Testis (tissue), 5 donors: ENCODE measurements at regions of chr17 and their contacts with region 1.

Region 1: DNA sequence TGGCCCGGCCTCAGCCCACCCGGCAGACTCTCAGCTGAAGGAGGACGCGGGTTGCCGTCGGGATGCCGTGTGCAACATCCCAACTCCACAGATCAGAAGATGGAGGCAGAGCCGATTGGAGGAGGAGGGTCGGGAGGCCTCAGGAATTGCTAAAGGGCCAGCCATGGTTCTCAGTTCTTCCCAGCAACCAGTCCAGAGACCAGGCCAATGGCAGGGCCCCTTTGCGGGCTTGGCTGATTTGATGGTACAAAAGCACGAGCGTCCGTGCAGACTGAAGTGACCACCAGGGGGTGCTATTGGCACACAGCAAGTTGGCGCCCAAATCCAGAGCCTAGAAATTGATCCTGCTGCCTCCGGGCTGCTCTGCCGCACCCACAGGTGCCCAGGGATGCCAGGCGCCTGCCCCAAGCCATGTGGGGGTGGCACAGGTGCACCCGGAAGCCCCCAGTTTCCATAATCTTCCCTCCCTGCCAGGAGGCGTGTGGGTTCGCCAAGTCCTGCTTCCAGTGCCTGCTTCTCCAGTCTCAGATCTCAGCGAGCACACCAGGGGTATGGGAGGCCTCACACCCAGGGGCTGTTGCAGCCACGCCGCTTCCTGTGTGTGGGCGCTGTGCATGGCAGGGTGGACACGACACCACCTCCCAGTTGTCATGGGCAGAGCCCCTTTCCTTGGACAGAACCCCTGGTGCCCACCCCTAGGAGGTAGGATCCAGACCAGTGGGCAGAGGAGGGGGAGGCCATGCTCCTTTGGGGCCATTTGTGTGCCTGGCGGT is 7.1 kb upstream of the TEX19 start:
- DNase-seq: peak; percentile 92
- H3K4me3 ChIP-seq: no peak overlapping the region
- H3K27ac ChIP-seq: no peak overlapping the region
- H3K4me1 ChIP-seq: peaks cover 8% of the 10 kb centered on the region
- H3K27me3 ChIP-seq: no peaks in the 10 kb centered on the region
- CTCF ChIP-seq: peak; percentile 92 to 98 (median 95)
- POLR2A ChIP-seq: no peak

Region 2: DNA sequence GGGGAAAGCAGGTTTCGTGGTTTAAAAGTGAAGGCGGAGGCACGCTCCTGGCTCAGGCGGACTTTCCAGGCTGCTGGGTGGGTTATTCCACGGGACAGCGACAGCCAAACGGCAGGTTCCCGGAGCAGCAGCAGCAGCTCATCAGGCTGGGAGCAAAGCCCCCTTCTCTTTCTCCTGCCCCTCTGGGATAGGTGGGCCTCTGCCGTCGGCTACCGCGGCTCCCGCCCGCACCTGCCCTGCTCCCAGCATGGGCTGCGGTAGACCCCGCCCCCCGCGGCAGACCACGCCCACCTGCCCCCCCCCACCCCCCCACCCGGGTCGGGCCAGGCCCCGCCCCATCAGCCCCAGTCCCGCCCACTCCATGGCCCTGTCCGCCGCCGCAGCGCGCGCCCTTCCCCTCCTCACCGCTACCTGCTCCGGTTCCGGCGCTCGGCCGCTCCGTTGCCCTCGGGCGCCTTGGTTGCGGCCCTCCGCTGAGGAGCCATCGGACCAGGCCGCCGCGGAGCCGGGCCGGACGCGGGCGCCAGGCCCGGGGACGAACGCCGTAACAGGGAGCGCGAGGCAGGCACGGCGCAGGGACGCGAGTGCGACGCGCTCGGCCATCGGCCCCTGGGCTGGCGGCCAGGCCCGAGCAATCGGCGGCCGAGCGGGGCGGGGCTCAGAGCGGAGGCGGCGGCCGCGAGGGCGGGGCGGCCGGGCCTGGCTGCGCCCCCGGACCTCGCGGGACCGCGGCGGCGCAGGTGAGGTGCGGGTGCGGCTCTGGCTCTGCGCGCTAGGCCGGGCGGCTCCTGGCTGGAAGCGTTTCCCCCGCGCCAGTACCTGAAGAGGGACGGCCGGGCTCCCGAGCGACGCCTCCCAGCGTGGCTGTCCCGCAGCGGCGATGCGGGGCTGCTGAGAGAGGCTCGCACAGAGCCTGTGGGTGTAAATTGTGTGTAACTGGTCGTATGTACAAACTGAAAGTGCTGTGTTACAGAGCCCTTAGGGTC is 66.4 kb after region 1 on chr17 and contains the starts of genes HEXD and OGFOD3:
- intact Hi-C with region 1: loop called (anchors 10 kb)
- DNase-seq: peak; percentile 82
- H3K4me3 ChIP-seq: peak within 1 kb of the TSS; percentile 79 to 83
- H3K27ac ChIP-seq: peak within 1 kb of the TSS; percentile 81 to 92
- H3K4me1 ChIP-seq: peaks cover 7% of the 10 kb centered on the region
- H3K27me3 ChIP-seq: no peaks in the 10 kb centered on the region
- CTCF ChIP-seq: peak in 1 of 3 experiments; percentile 39
- POLR2A ChIP-seq: no peak
- total RNA-seq, gene HEXD: 90.9 to 95.3 TPM
- total RNA-seq, gene OGFOD3: 28.9 to 37.4 TPM

Region 3: GRCh38 chr17:82494236-82495055 is 142.5 kb after region 1 on chr17:
- intact Hi-C with region 1: no loop called
- DNase-seq: peak; percentile 95
- H3K4me3 ChIP-seq: no peak overlapping the region
- H3K27ac ChIP-seq: peak overlapping the region in 1 of 2 donors; percentile 66
- H3K4me1 ChIP-seq: peaks cover 3% of the 10 kb centered on the region
- H3K27me3 ChIP-seq: no peaks in the 10 kb centered on the region
- CTCF ChIP-seq: peak; percentile 83 to 97 (median 90)
- POLR2A ChIP-seq: no peak